ENCODE measurements at regions of chr1 and their contacts with region 1.

Region 1: DNA sequence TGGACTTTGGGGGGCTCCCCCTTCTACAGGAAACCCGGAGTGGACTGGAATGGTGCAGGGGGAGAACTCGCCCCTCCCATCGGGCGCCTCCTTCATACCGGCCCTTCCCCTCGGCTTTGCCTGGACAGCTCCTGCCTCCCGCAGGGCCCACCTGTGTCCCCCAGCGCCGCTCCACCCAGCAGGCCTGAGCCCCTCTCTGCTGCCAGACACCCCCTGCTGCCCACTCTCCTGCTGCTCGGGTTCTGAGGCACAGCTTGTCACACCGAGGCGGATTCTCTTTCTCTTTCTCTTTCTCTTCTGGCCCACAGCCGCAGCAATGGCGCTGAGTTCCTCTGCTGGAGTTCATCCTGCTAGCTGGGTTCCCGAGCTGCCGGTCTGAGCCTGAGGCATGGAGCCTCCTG is at the start of gene TNFRSF14:
- DNase-seq: peak; percentile 60 to 85
- H3K4me3 ChIP-seq: peak within 1 kb of the TSS; percentile 62
- H3K27ac ChIP-seq: peak within 1 kb of the TSS; percentile 76 to 78
- H3K4me1 ChIP-seq: peaks cover 0 to 35% (median 22%) of the 10 kb centered on the region in 4 donors
- H3K27me3 ChIP-seq: no peaks in the 10 kb centered on the region
- CTCF ChIP-seq: no peak

Region 2: DNA sequence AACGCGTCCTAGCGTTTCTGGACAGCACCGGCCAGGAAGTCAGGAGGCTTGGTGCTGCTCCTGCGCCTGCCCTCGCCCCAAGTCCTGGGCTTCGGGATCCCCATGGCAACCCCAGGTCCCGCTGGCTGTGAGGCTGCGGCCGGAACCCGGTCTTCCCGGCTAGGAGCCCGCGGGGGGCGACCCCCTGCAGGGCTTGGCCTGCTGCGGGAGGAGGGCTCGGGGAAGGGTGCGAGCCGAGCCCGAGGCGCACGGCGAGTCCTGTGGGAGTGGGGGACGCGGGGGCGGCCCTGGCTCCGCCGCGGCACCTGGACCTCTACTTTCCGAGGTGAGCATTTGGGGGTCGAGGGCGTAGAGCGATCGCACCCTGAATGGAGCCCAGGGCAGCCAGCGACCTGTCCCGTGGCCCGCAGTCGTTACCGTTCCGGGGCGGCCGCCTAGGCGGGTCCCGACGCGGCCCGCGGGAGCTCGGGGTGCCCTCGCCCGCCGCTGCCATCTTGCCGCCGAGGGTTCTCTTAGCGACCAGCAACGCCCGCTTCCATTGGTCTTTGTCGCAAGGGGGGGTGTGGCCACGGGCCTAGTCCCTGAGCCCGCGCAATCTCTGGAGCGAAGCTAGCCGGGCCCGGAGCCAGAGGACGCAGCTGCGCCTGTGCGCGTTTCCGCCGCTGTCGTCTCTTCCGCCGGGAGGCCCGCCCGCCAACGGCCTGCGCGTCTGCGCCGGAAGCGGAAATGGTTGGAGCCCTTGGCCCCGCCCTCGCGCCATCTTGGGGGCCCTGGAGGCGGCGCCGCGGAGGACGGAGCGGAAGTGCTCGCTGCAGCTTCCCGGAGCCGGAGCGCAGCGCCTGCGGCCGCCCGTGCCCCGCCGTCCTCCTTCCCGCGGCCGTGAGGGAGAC is 165.0 kb before region 1 on chr1 and contains the starts of genes MORN1 and RER1:
- intact Hi-C with region 1: loop called (anchors 5 kb)
- DNase-seq: peak; percentile 98 to 99
- H3K4me3 ChIP-seq: peak within 1 kb of the TSS; percentile 87 to 99
- H3K27ac ChIP-seq: peak within 1 kb of the TSS; percentile 74 to 89
- H3K4me1 ChIP-seq: peaks cover 4 to 45% (median 34%) of the 10 kb centered on the region in 4 donors
- H3K27me3 ChIP-seq: no peaks in the 10 kb centered on the region
- CTCF ChIP-seq: no peak

Measured in tibial artery (tissue), 4 donors.